ENCODE measurements at regions of chr6 and their contacts with region 1.

Region 1: GRCh38 chr6:146857180-146857979 is 258.6 kb downstream of the ADGB start:
- DNase-seq: peak; percentile 89
- ATAC-seq: peak; percentile 56
- H3K4me3 Mint-ChIP-seq: peak overlapping the region; percentile 32
- H3K27ac Mint-ChIP-seq: peak overlapping the region; percentile 66
- H3K4me1 Mint-ChIP-seq: peaks cover 38% of the 10 kb centered on the region
- H3K27me3 Mint-ChIP-seq: peaks cover 2% of the 10 kb centered on the region

Region 2: DNA sequence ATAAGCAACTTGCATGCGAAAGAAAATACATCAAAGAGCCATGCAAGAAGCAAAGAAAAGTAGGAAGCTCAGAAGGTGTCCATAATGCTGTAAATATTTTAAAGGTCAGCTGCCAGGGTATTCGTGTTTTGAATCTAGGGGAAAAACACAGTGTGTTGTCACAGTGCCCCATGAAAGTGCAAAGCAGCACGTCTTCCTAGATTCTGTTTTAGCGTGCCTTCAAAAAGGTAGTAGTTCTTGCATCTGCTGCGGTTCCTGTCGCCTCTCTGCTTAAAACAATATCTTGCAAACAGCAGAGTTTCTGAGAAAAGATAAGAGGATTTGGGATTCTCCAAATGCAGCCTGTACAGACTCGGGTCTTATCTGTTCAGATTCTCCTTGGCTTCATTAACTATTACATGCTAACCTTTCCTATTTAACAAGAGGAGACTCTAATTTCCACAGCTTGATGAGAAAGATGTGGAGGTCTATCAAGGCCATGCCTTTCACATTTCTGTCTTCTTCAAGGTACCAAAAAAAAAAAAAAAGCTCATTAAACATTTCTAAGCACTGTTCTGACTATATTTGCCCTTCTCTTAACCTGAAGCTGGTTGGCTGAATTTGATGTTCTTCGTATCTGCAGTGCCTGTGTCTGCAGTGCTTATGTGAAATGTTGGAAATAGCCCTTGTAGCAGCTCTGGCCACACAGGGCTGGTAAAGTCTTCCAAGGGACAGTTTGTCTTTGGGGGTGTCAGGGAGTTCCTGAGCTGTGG is 38.9 kb after region 1 on chr6:
- CTCF ChIA-PET with region 1: no interaction called
- POLR2A ChIA-PET with region 1: no interaction called
- intact Hi-C with region 1: no loop called
- DNase-seq: no peak
- ATAC-seq: no peak
- H3K4me3 Mint-ChIP-seq: no peak overlapping the region
- H3K27ac Mint-ChIP-seq: no peak overlapping the region
- H3K4me1 Mint-ChIP-seq: no peaks in the 10 kb centered on the region
- H3K27me3 Mint-ChIP-seq: peaks cover 4% of the 10 kb centered on the region

Region 3: DNA sequence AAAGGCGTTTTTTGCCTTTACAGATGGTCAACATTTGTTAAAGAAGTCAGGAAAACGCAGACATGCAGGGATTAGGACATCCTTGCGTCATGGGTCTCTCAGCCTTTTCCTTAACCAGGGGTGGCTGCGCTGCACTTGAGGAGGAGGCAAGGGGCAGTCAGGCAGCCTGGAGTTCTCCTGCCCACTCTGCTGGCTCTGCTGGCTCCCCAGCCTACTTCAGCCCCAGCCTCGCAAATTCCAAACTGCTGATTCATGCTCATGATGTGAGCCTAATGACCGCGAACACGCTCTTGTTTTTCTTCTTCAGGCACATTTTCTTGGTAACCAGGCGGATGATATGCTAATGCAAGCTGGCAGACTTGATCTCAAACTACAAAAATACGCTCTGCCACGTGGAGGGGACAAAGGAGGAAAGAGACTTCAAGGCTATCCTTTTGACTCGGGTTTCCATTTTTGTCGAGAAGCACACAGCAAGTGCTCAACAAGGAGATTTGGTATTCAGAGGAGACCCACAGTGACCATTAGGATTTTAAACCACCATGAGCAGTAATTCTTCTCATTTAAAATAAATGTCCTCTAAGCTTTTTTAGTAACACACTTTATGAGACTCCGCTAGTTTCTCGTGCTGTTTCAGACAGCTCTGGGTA is 56.6 kb after region 1 on chr6:
- CTCF ChIA-PET with region 1: no interaction called
- POLR2A ChIA-PET with region 1: no interaction called
- intact Hi-C with region 1: loop called (anchors 2 kb)
- DNase-seq: peak; percentile 41
- ATAC-seq: peak; percentile 51
- H3K4me3 Mint-ChIP-seq: no peak overlapping the region
- H3K27ac Mint-ChIP-seq: no peak overlapping the region
- H3K4me1 Mint-ChIP-seq: peaks cover 21% of the 10 kb centered on the region
- H3K27me3 Mint-ChIP-seq: peaks cover 5% of the 10 kb centered on the region

Region 4: GRCh38 chr6:147194652-147195411 is 337.5 kb after region 1 on chr6:
- CTCF ChIA-PET with region 1: interaction called, 3 read pairs
- POLR2A ChIA-PET with region 1: no interaction called
- intact Hi-C with region 1: loop called in 1 of 2 experiments (anchors 1 kb)
- DNase-seq: no peak
- ATAC-seq: peak; percentile 86
- H3K4me3 Mint-ChIP-seq: no peak overlapping the region
- H3K27ac Mint-ChIP-seq: peak overlapping the region; percentile 84
- H3K4me1 Mint-ChIP-seq: peaks cover 20% of the 10 kb centered on the region
- H3K27me3 Mint-ChIP-seq: no peaks in the 10 kb centered on the region

Region 5: GRCh38 chr6:147285087-147285855 is 427.9 kb after region 1 on chr6:
- CTCF ChIA-PET with region 1: interaction called, 3 read pairs
- POLR2A ChIA-PET with region 1: no interaction called
- intact Hi-C with region 1: loop called (anchors 1 kb)
- DNase-seq: no peak
- ATAC-seq: peak; percentile 33
- H3K4me3 Mint-ChIP-seq: no peak overlapping the region
- H3K27ac Mint-ChIP-seq: peak overlapping the region; percentile 7
- H3K4me1 Mint-ChIP-seq: peaks cover 38% of the 10 kb centered on the region
- H3K27me3 Mint-ChIP-seq: no peaks in the 10 kb centered on the region

Region 6: GRCh38 chr6:148166339-148166968 is 1309.1 kb after region 1 on chr6:
- CTCF ChIA-PET with region 1: interaction called, 3 read pairs
- POLR2A ChIA-PET with region 1: no interaction called
- intact Hi-C with region 1: loop called in 1 of 2 experiments (anchors 5 kb)
- DNase-seq: no peak
- ATAC-seq: peak; percentile 33
- H3K4me3 Mint-ChIP-seq: no peak overlapping the region
- H3K27ac Mint-ChIP-seq: no peak overlapping the region
- H3K4me1 Mint-ChIP-seq: peaks cover 2% of the 10 kb centered on the region
- H3K27me3 Mint-ChIP-seq: peaks cover 5% of the 10 kb centered on the region

Measured in activated CD4-positive, alpha-beta T cell treated with anti-CD3 and anti-CD28 coated beads for 36 hours (primary cell).